Mammary epithelial cell (primary cell): ENCODE measurements at regions of chr16 and their contacts with region 1.

Region 1: GRCh38 chr16:88376835-88377726 is 5.7 kb upstream of the ZNF469 start:
- DNase-seq: no peak
- H3K4me3 ChIP-seq: no peak overlapping the region
- H3K27ac ChIP-seq: no peak overlapping the region
- H3K4me1 ChIP-seq: peaks cover 16% of the 10 kb centered on the region
- H3K27me3 ChIP-seq: no peaks in the 10 kb centered on the region
- CTCF ChIP-seq: peak in 1 of 2 donors; percentile 2

Region 2: GRCh38 chr16:88331989-88332920 is 44.8 kb before region 1 on chr16:
- CTCF ChIA-PET with region 1: no interaction called
- dilution Hi-C with region 1: loop called (anchors 5 kb)
- in situ Hi-C with region 1: no loop called
- intact Hi-C with region 1: no loop called
- DNase-seq: peak; percentile 98
- H3K4me3 ChIP-seq: no peak overlapping the region
- H3K27ac ChIP-seq: peak overlapping the region; percentile 76
- H3K4me1 ChIP-seq: peaks cover 28% of the 10 kb centered on the region
- H3K27me3 ChIP-seq: no peaks in the 10 kb centered on the region
- CTCF ChIP-seq: no peak

Region 3: GRCh38 chr16:88393034-88393433 is 16.0 kb after region 1 on chr16:
- CTCF ChIA-PET with region 1: no interaction called
- dilution Hi-C with region 1: no loop called
- in situ Hi-C with region 1: no loop called
- intact Hi-C with region 1: no loop called
- DNase-seq: no peak
- H3K4me3 ChIP-seq: no peak overlapping the region
- H3K27ac ChIP-seq: no peak overlapping the region
- H3K4me1 ChIP-seq: peaks cover 3% of the 10 kb centered on the region
- H3K27me3 ChIP-seq: no peaks in the 10 kb centered on the region
- CTCF ChIP-seq: no peak

Region 4: GRCh38 chr16:88415713-88416323 is 38.7 kb after region 1 on chr16:
- CTCF ChIA-PET with region 1: no interaction called
- dilution Hi-C with region 1: loop called (anchors 5 kb)
- in situ Hi-C with region 1: no loop called
- intact Hi-C with region 1: no loop called
- DNase-seq: no peak
- H3K4me3 ChIP-seq: no peak overlapping the region
- H3K27ac ChIP-seq: no peak overlapping the region
- H3K4me1 ChIP-seq: no peaks in the 10 kb centered on the region
- H3K27me3 ChIP-seq: no peaks in the 10 kb centered on the region
- CTCF ChIP-seq: no peak

Region 5: DNA sequence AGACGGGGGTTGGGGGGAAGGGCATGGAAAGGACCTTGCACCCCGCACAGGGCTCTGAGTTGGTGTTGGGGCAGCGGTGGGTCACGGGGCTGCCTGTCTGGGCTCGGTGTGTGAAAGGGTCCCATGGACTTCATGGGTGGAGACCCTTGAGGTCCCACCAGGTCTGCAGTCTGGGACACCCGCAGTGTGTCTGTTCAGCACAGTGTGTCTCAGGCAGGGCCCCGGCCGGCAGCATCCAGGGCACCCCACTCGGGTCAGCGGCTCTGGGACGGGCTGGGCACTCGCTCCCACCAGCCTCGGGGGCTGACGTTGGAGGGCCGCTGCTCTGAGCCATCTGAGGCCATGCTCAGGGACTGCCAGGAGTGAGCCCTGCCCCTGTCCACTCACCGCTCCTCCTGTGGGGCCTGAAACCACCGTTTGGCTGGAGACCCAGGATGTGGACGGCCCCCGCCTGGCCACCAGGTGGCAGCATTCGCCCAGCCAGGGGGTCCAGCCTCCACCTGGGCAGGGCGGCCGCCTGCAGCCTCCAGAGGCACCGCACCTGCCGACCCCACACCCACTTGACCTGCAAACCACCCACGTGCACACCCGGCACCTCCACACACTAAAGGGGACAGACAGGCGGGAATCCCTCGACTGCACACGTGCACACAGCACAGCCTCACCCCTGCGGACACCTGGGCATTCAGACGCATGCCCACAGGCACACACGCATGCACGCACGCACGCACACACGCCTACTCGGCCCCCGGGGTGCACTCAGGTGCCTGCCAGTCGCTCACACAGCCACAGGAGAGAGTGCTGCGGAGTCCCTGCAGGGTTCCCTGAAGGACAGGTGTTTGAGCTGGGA is 65.9 kb after region 1 on chr16:
- CTCF ChIA-PET with region 1: no interaction called
- dilution Hi-C with region 1: no loop called
- in situ Hi-C with region 1: no loop called
- intact Hi-C with region 1: no loop called
- DNase-seq: peak; percentile 62
- H3K4me3 ChIP-seq: no peak overlapping the region
- H3K27ac ChIP-seq: no peak overlapping the region
- H3K4me1 ChIP-seq: peaks cover 7% of the 10 kb centered on the region
- H3K27me3 ChIP-seq: no peaks in the 10 kb centered on the region
- CTCF ChIP-seq: peak; percentile 73 to 92

Region 6: GRCh38 chr16:89453501-89454321 is 1076.6 kb after region 1 on chr16:
- CTCF ChIA-PET with region 1: no interaction called
- dilution Hi-C with region 1: no loop called
- in situ Hi-C with region 1: no loop called
- intact Hi-C with region 1: no loop called
- DNase-seq: no peak
- H3K4me3 ChIP-seq: no peak overlapping the region
- H3K27ac ChIP-seq: no peak overlapping the region
- H3K4me1 ChIP-seq: peaks cover 38% of the 10 kb centered on the region
- H3K27me3 ChIP-seq: no peaks in the 10 kb centered on the region
- CTCF ChIP-seq: peak; percentile 11 to 17